Dendritic cell treated with granulocyte-macrophage colony-stimulating factor and Interleukin-4, amounts not matched to agents 40 ng/mL and 50 ng/mL, for 4 days (primary cell): ENCODE measurements at regions of chr6 and their contacts with region 1.

Region 1: GRCh38 chr6:46848684-46849360 is 55.6 kb downstream of the MEP1A start:
- H3K4me3 Mint-ChIP-seq: peak overlapping the region; percentile 30
- H3K27ac Mint-ChIP-seq: no peak overlapping the region
- H3K4me1 Mint-ChIP-seq: peaks cover 11% of the 10 kb centered on the region
- H3K27me3 Mint-ChIP-seq: peaks cover 13% of the 10 kb centered on the region

Region 2: DNA sequence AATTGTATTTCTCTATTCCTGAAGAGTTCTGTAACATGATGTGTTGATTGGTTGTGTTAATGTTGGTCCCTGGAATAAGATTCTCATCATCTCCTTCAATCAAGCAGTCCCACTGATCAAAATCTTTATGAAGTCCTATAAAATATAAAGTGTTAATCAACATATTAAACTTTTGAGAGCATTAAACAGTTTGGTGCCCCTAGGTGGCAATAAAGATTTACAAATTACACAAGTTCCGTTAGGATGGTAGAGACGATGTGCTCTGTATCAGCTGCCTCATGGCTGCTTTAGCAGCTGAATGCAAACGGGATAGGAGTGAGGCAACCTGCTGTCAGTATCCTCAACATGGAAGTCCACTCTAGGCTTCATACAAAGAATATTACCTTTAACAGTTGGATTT is 144.3 kb before region 1 on chr6:
- intact Hi-C with region 1: loop called (anchors 5 kb)
- H3K4me3 Mint-ChIP-seq: no peak overlapping the region
- H3K27ac Mint-ChIP-seq: no peak overlapping the region
- H3K4me1 Mint-ChIP-seq: peaks cover 21% of the 10 kb centered on the region
- H3K27me3 Mint-ChIP-seq: peaks cover 2% of the 10 kb centered on the region

Region 3: GRCh38 chr6:46990031-46990644 is 141.3 kb after region 1 on chr6:
- intact Hi-C with region 1: loop called (anchors 2 kb)
- H3K4me3 Mint-ChIP-seq: no peak overlapping the region
- H3K27ac Mint-ChIP-seq: no peak overlapping the region
- H3K4me1 Mint-ChIP-seq: peaks cover 7% of the 10 kb centered on the region
- H3K27me3 Mint-ChIP-seq: no peaks in the 10 kb centered on the region

Region 4: DNA sequence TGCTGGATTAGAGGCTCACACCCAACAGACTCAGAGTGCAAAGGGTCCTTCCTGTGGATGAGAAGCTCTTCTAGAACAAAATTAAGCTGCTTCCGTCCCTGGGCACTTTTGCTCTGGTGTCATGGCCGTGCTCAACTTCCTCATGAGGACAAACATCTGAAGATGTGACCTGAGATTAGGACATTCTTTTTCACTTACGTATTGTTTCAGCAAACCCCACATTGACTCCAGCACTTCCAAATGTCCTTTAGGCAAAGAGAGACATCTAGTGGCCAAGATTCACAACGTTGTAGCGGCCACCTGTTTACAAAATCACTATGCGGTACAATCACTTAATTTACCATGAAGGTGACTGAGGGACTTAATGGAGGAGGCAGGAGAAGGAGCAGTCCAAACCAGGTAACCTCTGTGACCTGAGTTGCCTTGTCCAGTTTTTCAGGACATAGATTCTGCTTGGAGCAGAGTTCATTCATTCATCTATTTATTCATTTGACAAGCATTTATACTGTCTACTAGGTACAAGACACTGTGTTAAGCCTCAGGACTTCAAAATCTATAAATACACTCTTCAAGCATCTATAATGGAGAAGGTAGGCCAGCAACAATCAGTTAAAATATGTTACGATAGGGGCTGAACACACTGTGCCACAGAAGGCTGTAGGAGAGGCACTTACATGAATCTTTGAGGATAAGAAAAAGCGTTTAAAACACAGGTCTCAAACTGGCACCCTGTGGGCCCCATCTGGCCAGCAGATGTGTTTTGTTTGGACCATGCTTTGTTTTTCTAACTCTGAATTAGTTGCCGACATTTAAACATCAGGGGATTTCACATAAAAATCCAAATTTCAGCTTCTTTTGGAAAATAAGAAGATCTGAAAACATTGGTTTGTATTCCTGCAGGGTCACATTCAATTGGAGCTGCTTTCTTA is 198.9 kb after region 1 on chr6:
- intact Hi-C with region 1: loop called (anchors 2 kb)
- H3K4me3 Mint-ChIP-seq: no peak overlapping the region
- H3K27ac Mint-ChIP-seq: no peak overlapping the region
- H3K4me1 Mint-ChIP-seq: peaks cover 7% of the 10 kb centered on the region
- H3K27me3 Mint-ChIP-seq: peaks cover 6% of the 10 kb centered on the region